Heart right ventricle (tissue), 16 donors: ENCODE measurements at regions of chr10 and their contacts with region 1.

Region 1: GRCh38 chr10:89701238-89702120 is at the start of gene KIF20B:
- DNase-seq: peak; percentile 95 to 96
- ATAC-seq: peak; percentile 100
- H3K4me3 ChIP-seq: peak within 1 kb of the TSS; percentile 53 to 77 (median 67)
- H3K27ac ChIP-seq: peak within 1 kb of the TSS; percentile 57 to 91 (median 83)
- H3K4me1 ChIP-seq: peaks cover 0 to 17% (median 12%) of the 10 kb centered on the region in 9 donors
- H3K27me3 ChIP-seq: no peaks in the 10 kb centered on the region
- CTCF ChIP-seq: peak in 8 of 9 donors; percentile 32 to 78 (median 54)
- total RNA-seq, gene KIF20B: 1.5 to 8.5 (median 3.2) TPM

Region 2: GRCh38 chr10:89426230-89426868 is 275.1 kb before region 1 on chr10:
- intact Hi-C with region 1: loop called in 5 of 10 experiments (anchors 5 to 10 kb)
- DNase-seq: peak in 1 of 2 donors; percentile 44
- ATAC-seq: peak; percentile 50 to 87 (median 78)
- H3K4me3 ChIP-seq: no peak overlapping the region
- H3K27ac ChIP-seq: no peak overlapping the region
- H3K4me1 ChIP-seq: peaks cover 0 to 36% (median 4%) of the 10 kb centered on the region in 9 donors
- H3K27me3 ChIP-seq: no peaks in the 10 kb centered on the region
- CTCF ChIP-seq: peak; percentile 76 to 90 (median 84)

Region 3: DNA sequence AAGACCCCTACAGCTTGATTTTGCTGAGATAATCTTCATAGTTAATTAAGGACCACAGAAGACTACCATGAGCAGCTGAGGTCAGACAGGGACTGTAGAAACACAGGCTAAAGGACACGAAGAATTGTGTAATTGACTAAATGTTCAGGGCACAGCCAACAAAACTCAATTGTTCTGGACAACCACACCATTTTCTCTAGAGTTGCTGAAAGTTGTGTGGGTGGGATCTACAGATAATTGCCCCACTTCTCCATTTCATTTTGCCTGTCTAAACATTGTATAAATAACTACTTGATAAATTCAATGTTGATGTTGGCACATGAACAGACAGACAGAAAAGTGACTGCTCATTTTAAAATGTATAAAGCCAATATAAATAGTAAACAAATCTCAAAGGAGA is 127.1 kb before region 1 on chr10:
- intact Hi-C with region 1: loop called in 1 of 10 experiments (anchors 10 kb)
- DNase-seq: no peak
- ATAC-seq: no peak
- H3K4me3 ChIP-seq: no peak overlapping the region
- H3K27ac ChIP-seq: no peak overlapping the region
- H3K4me1 ChIP-seq: peaks cover 0 to 4% (median 0%) of the 10 kb centered on the region in 9 donors
- H3K27me3 ChIP-seq: no peaks in the 10 kb centered on the region
- CTCF ChIP-seq: no peak

Region 4: GRCh38 chr10:89591111-89591795 is 110.2 kb before region 1 on chr10:
- intact Hi-C with region 1: loop called in 1 of 10 experiments (anchors 5 kb)
- DNase-seq: peak; percentile 23 to 31
- ATAC-seq: peak; percentile 32 to 80 (median 74)
- H3K4me3 ChIP-seq: no peak overlapping the region
- H3K27ac ChIP-seq: peak overlapping the region; percentile 41 to 85 (median 77)
- H3K4me1 ChIP-seq: peaks cover 0 to 68% (median 19%) of the 10 kb centered on the region in 9 donors
- H3K27me3 ChIP-seq: no peaks in the 10 kb centered on the region
- CTCF ChIP-seq: peak in 2 of 9 donors; percentile 20 to 24

Region 5: DNA sequence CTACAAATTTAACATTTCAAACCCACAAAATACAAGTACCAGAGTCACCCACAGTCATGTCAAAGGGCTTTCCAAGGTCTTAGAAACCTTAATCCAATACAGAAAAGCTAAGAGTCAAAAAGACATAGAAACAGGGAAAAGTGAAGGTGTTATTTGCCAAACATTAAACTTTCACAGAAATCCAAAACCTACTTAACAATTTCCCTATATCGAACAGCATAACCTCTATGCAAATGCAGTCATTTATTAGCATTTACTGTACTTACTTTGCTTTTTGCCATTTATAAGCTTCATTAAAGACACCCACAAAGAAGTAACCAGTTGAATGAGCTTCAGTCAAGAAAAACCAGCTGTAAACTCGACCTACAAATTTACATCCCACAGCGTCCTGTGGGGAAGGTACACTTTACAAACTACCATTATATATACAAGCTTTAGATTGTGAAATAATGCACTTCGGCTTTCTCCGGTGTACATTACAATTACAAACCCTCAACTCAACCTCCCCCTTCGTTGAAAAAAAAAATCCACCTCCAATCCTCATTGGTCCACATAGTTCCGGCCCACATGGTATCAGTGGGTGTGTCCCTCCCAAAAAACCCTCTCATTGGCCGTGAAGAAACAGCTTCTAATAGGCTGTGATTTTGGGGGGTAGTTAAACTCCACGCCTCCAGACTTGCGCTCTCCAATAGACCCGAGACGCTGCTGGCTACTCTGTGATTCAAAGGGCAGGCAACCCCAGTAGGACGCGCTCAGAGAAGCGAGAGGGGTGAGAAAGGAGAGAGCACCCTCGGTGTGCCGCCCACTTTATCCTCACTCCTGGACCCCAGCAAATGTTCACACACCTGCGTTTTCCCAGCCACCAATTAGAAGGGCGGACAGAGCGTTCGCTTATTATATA is 57.8 kb before region 1 on chr10:
- intact Hi-C with region 1: loop called in 8 of 10 experiments (anchors 1 to 10 kb)
- DNase-seq: peak; percentile 58 to 87
- ATAC-seq: peak; percentile 88 to 94 (median 92)
- H3K4me3 ChIP-seq: peak overlapping the region; percentile 70 to 98 (median 83)
- H3K27ac ChIP-seq: peak overlapping the region; percentile 88 to 98 (median 95)
- H3K4me1 ChIP-seq: peaks cover 0 to 49% (median 19%) of the 10 kb centered on the region in 9 donors
- H3K27me3 ChIP-seq: no peaks in the 10 kb centered on the region
- CTCF ChIP-seq: no peak